ENCODE measurements at regions of chr17 and their contacts with region 1.

Region 1: DNA sequence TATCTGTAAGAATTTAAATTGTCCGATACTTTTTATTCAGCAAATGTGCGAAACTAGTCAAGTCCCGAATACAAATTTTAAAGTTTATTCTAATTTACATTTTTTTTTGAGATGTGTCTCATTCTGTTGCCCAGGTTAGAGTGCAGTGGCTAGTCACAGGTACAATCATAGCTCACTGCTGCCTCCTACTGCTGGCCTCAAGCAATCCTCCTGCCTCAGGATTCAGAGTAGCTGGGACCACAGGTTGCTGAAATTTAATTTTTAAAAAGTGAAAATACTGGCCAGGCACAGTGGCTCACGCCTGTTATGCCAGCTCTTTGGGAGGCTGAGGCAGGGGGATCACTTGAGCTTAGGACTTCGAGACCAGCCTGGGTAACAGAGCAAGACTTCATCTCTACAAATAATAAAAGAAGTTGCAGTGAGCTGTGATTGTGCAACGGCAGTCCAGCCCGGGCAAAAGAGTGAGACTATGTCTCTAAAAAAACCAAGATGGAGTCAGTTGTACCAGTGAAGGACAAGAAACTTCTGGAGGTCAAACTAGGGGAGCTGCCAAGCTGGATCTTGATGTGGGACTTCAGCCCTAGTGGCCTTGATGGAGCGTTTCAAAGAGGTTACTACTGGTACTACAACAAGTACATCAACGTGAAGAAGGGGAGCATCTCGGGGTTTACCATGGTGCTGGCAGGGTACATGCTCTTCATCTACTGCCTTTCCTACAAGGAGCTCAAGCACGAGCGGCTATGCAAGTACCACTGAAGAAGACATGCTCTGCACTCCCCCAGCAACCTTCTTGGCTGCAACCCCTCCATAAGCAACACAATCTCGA is 5.6 kb downstream of the POLG2 start:
- DNase-seq: no peak
- H3K4me3 ChIP-seq: no peak overlapping the region
- H3K27ac ChIP-seq: no peak overlapping the region
- H3K27me3 ChIP-seq: no peaks in the 10 kb centered on the region
- CTCF ChIP-seq: peak; percentile 73

Region 2: GRCh38 chr17:64331946-64332493 is 159.2 kb before region 1 on chr17:
- CTCF ChIA-PET with region 1: interaction called, 10 read pairs
- POLR2A ChIA-PET with region 1: no interaction called
- DNase-seq: no peak
- H3K4me3 ChIP-seq: no peak overlapping the region
- H3K27ac ChIP-seq: no peak overlapping the region
- H3K27me3 ChIP-seq: peaks cover 23% of the 10 kb centered on the region
- CTCF ChIP-seq: no peak

Region 3: DNA sequence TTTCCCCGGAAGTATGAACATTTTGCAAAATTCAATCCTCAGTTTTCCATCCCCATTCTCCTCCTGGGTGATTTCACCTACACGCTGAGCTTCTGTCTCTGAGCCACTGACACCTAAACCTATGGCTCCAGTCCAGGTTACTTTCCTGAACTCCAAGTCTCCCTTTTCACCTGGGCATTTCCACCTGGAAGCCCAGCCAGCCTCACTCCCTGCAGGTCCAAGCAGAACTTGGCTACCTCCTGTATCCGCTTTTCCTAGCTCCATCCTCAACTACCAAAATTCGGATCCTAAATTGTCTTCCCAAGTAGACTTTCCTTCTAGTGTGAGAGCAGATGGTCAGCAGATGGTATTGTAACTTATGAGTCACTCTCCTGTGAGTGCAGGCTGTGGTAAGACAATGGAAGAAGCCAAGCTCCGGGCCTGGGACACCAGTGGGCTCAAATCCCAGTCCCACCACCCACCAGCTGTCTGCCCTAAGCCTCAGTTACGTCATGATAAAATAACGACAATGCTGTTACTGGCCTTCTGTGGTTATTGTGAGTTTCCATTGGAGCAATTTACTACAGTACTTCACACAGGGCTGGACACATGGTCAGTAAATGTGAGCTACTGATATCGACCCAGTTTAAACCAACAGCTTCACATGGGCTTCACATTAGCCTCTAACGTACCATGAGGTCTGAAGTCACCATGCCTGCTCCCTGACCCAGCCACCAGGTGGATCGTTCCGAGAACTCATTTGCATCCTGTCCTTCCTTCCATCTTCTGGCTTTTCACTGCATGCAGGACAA is 133.9 kb before region 1 on chr17:
- CTCF ChIA-PET with region 1: no interaction called
- POLR2A ChIA-PET with region 1: no interaction called
- DNase-seq: peak; percentile 93
- H3K4me3 ChIP-seq: no peak overlapping the region
- H3K27ac ChIP-seq: peak overlapping the region; percentile 73
- H3K27me3 ChIP-seq: peaks cover 6% of the 10 kb centered on the region
- CTCF ChIP-seq: 0 out of 2 replicates have a peak, but pooled peaks have one; percentile 6

Region 4: DNA sequence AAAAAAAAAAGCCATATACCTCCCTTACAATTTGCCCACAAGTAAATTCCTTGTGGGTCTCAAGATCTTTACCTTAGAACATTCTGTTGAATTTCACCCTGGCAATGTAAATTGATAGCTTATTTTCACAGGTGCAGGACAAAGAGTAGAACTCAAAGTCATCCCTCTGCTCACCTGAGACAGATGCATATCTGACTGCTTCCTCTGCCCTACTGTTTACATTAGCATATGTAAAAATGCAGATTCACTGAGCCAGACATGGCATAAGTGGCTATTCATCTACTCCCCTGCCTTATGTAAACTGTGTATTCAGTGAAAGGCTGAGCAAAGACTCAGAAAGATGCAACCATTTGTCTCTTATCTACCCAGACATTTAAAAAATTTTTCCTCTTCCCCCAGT is 64.7 kb before region 1 on chr17:
- CTCF ChIA-PET with region 1: interaction called, 236 read pairs
- POLR2A ChIA-PET with region 1: interaction called, 3 read pairs
- DNase-seq: no peak
- H3K4me3 ChIP-seq: no peak overlapping the region
- H3K27ac ChIP-seq: no peak overlapping the region
- H3K27me3 ChIP-seq: peaks cover 13% of the 10 kb centered on the region
- CTCF ChIP-seq: no peak

Region 5: GRCh38 chr17:64479650-64480049 is 11.6 kb before region 1 on chr17:
- CTCF ChIA-PET with region 1: interaction called, 59 read pairs
- POLR2A ChIA-PET with region 1: interaction called, 3 read pairs
- DNase-seq: no peak
- H3K4me3 ChIP-seq: no peak overlapping the region
- H3K27ac ChIP-seq: no peak overlapping the region
- H3K27me3 ChIP-seq: no peaks in the 10 kb centered on the region
- CTCF ChIP-seq: no peak

Region 6: GRCh38 chr17:64506576-64507477 is 15.6 kb after region 1 on chr17 and contains the start of gene CEP95:
- CTCF ChIA-PET with region 1: interaction called, 14 read pairs
- POLR2A ChIA-PET with region 1: interaction called, 77 read pairs
- DNase-seq: peak; percentile 98
- H3K4me3 ChIP-seq: peak within 1 kb of the TSS; percentile 94
- H3K27ac ChIP-seq: peak within 1 kb of the TSS; percentile 99
- H3K27me3 ChIP-seq: no peaks in the 10 kb centered on the region
- CTCF ChIP-seq: no peak
- polyA plus RNA-seq, gene CEP95: 18.6 and 29.8 TPM in 2 replicates

Measured in AG04450 (cell line).